ENCODE measurements at regions of chr2 and their contacts with region 1.

Region 1: DNA sequence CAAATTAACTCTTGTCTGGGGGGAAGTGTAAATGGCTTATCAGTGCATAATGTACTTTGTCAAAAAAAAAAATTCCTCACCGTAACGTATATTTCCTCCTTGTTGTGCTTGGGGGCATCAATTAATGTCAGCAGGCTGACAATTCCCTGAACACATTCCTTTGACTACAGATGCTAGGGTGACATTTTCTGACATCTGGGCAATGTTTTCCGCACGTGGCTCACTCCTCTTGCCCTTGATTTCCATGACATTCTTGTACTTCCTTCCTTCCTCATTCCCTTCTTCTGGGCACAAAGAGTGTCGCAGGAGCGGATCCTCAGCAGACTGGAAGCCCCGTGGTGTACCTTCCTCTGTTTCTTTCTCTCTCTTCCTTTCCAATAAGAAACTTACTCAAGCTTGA is 173.7 kb downstream of the SP3 start:
- DNase-seq: peak; percentile 88
- H3K4me3 ChIP-seq: no peak overlapping the region
- H3K27ac ChIP-seq: no peak overlapping the region
- H3K4me1 ChIP-seq: peaks cover 12% of the 10 kb centered on the region
- H3K27me3 ChIP-seq: peaks cover 5% of the 10 kb centered on the region
- CTCF ChIP-seq: no peak

Region 2: DNA sequence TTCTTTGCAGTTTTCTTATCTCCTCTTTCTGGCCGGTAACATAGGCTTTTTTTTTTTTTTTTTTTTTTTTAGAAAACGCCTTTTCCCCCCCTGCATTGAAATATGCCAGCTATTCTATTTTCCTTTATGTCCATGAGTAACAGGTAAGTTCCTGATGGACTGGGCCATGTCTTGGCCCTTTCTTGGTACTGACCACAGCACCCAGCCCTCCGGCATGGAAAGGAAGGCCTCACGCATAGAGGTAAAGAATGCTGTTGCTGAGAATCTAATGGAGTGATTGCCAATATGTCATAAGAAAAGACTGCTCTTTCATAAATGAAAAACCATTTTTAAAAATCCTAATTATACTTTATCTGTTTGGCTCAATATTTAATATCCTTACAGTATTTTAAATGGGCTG is 237.0 kb after region 1 on chr2:
- CTCF ChIA-PET with region 1: no interaction called
- POLR2A ChIA-PET with region 1: interaction called, 14 read pairs
- intact Hi-C with region 1: no loop called
- DNase-seq: no peak
- H3K4me3 ChIP-seq: no peak overlapping the region
- H3K27ac ChIP-seq: no peak overlapping the region
- H3K4me1 ChIP-seq: peaks cover 25% of the 10 kb centered on the region
- H3K27me3 ChIP-seq: no peaks in the 10 kb centered on the region
- CTCF ChIP-seq: no peak